Posterior cingulate gyrus (tissue), 11 donors: ENCODE measurements at regions of chr15 and their contacts with region 1.

Region 1: DNA sequence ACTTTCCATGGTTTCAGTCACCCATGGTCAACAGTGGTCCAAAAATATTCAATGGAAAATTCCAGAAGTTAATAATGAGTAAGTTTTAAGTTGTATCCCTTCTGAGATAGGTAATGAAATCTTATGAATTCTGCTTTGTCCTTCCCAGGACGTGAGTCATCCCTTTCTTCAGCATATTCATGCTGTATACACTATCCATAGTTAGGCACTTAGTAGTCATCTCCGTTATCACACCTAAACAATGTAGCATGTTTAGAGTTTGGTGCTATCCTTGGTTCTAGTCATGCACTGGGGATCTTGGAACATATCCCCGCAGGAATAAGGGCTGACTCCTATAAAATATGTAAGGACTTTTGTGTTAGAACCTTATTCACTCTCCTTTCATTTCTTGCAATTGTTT is 153.2 kb downstream of the UNC13C start:
- DNase-seq: no peak

Region 2: GRCh38 chr15:54187325-54187724 is 55.9 kb after region 1 on chr15:
- intact Hi-C with region 1: loop called (anchors 10 kb)
- DNase-seq: no peak